ENCODE measurements at regions of chr20 and their contacts with region 1.

Region 1: GRCh38 chr20:50713657-50714101 is 17.7 kb upstream of the PARD6B start:
- DNase-seq: no peak

Region 2: DNA sequence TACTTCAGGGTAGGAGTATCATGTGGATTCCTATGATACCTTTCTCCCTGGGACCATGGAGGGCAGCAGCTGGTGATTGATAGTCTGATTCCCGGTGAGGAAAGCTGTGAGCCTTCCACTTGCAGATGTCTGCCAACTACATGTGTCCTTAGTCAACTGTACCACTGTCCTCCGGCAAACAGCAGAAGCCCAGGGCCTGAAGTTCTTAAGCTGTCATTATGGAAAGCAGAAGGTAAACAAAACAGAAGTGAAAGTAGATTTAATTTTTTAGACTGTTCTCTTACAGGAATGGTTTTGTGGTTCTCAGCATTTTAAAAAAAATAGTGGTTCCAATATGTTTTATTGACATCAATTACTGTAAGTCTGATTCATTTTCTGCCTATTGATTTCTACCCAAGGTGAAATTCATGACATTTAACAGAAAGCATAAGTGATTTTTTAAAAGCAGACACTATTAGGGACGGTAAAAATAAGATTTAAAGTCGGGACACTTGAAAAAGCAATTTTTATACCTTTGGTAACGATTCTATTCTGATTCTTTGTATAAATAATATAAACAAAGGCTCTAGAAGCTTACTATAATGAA is 166.9 kb before region 1 on chr20:
- in situ Hi-C with region 1: no loop called
- DNase-seq: no peak

Region 3: DNA sequence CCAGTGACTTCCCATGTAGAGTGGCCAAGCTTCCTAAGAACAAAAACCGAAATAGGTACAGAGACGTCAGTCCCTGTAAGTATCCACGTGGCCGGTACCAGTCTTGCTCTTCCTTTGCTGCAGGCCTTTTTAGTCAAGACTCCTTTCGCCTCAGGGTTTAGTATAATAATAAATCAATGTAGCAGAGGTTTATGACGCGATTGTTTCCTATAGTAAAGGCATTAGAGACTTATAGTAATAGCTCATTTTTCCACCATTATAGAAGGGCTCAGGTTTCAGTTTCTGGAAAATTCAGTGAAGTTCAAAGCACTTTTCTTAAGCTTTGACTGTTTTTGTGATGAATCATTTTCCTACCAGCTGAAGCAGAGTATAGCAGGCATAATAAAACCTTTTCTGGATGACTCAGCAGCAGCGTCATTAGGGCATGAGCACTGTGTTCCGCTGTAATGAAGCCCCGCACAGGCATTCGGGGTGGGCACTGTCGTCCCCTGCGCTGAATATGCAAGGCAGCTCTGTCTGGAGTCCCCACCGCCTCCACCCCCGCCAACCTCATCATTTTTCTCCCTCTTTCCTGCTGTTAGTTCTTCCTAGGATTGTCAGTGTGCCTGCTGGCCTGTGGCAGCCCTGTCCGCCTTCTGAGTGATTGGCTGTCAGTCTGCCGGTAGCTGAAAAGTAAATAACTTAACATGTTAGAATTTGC is 152.2 kb before region 1 on chr20:
- in situ Hi-C with region 1: no loop called
- DNase-seq: peak; percentile 91

Region 4: GRCh38 chr20:50645253-50646118 is 68.2 kb before region 1 on chr20:
- in situ Hi-C with region 1: loop called (anchors 10 kb)
- DNase-seq: peak; percentile 98